ENCODE measurements at regions of chr17 and their contacts with region 1.

Region 1: GRCh38 chr17:62627219-62627910 is at the start of gene MRC2:
- DNase-seq: peak; percentile 67
- H3K4me3 ChIP-seq: peak within 1 kb of the TSS; percentile 54 to 80 (median 79)
- H3K27ac ChIP-seq: peak within 1 kb of the TSS; percentile 31
- H3K4me1 ChIP-seq: peaks cover 38% of the 10 kb centered on the region
- H3K27me3 ChIP-seq: no peaks in the 10 kb centered on the region
- CTCF ChIP-seq: no peak
- total RNA-seq, gene MRC2: 147 to 512 TPM

Region 2: GRCh38 chr17:62650587-62650986 is 23.2 kb after region 1 on chr17:
- CTCF ChIA-PET with region 1: no interaction called
- dilution Hi-C with region 1: no loop called
- in situ Hi-C with region 1: no loop called
- intact Hi-C with region 1: loop called (anchors 2 kb)
- DNase-seq: peak; percentile 40
- H3K4me3 ChIP-seq: no peak overlapping the region
- H3K27ac ChIP-seq: no peak overlapping the region
- H3K4me1 ChIP-seq: peaks cover 36% of the 10 kb centered on the region
- H3K27me3 ChIP-seq: no peaks in the 10 kb centered on the region
- CTCF ChIP-seq: no peak

Region 3: GRCh38 chr17:62808196-62808930 is 181.0 kb after region 1 on chr17 and contains the start of gene MARCHF10:
- CTCF ChIA-PET with region 1: no interaction called
- dilution Hi-C with region 1: no loop called
- in situ Hi-C with region 1: no loop called
- intact Hi-C with region 1: no loop called
- DNase-seq: no peak
- H3K4me3 ChIP-seq: peak within 1 kb of the TSS in 1 of 3 experiments; percentile 28
- H3K27ac ChIP-seq: no peak within 1 kb of the TSS
- H3K4me1 ChIP-seq: peaks cover 13% of the 10 kb centered on the region
- H3K27me3 ChIP-seq: no peaks in the 10 kb centered on the region
- CTCF ChIP-seq: no peak
- total RNA-seq, gene MARCHF10: under 0.01 TPM in 1 of 2 donors, not detected in the other

Region 4: GRCh38 chr17:63096426-63096825 is 469.1 kb after region 1 on chr17:
- CTCF ChIA-PET with region 1: no interaction called
- dilution Hi-C with region 1: no loop called
- in situ Hi-C with region 1: no loop called
- intact Hi-C with region 1: no loop called
- DNase-seq: no peak
- H3K4me3 ChIP-seq: no peak overlapping the region
- H3K27ac ChIP-seq: no peak overlapping the region
- H3K4me1 ChIP-seq: peaks cover 14% of the 10 kb centered on the region
- H3K27me3 ChIP-seq: no peaks in the 10 kb centered on the region
- CTCF ChIP-seq: no peak